Activated CD4-positive, alpha-beta T cell treated with anti-CD3 and anti-CD28 coated beads, Interleukin-2, amount 10 ng/mL, durations not matched to agents 24 days and 14 days (primary cell): ENCODE measurements at regions of chr9 and their contacts with region 1.

Region 1: GRCh38 chr9:27726244-27727081 is 153.2 kb upstream of the C9orf72 start:
- DNase-seq: peak; percentile 88
- H3K4me3 Mint-ChIP-seq: no peak overlapping the region
- H3K27ac Mint-ChIP-seq: no peak overlapping the region
- H3K4me1 Mint-ChIP-seq: peaks cover 3% of the 10 kb centered on the region
- H3K27me3 Mint-ChIP-seq: peaks cover 3% of the 10 kb centered on the region

Region 2: DNA sequence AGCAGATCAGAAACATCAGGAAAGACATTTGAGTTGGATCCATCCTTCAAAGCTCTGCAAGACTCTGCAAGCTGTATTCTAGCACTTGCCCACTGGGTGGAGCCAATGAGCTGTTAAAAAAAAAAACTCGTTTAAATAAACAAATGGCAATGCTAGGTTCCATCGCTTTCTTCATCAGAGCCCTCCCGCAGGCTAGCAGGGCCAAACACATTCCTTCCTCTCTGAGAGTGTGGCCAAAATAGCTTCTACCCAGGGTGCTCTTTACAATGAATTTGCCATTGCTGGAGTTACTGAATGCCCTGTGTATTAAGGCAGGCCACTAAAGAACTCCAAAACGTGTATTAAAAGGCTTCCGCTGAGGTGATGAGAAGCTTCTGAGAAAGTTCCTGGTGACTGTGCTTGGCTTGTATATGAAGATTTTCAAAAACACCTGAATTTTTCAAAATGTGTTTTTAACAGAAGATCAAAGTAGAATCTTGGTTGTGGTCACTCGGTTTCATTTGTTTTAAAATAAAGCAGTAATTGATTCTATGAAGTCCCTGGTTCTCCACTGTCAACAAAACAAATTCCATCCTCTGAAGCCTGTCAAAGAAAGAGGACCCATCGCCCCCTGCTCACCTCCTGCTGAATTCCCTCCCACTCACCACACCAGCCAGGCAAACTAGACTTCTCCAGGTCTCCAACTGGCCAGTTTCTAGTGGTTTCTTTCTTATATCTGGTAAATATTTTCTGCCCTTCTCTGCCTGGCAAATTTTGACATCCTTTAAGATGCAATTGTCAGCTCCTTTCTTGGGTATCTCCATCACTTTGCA is 393.0 kb before region 1 on chr9:
- intact Hi-C with region 1: loop called (anchors 5 kb)
- DNase-seq: peak; percentile 89
- H3K4me3 Mint-ChIP-seq: no peak overlapping the region
- H3K27ac Mint-ChIP-seq: no peak overlapping the region
- H3K4me1 Mint-ChIP-seq: peaks cover 3% of the 10 kb centered on the region
- H3K27me3 Mint-ChIP-seq: peaks cover 5% of the 10 kb centered on the region

Region 3: DNA sequence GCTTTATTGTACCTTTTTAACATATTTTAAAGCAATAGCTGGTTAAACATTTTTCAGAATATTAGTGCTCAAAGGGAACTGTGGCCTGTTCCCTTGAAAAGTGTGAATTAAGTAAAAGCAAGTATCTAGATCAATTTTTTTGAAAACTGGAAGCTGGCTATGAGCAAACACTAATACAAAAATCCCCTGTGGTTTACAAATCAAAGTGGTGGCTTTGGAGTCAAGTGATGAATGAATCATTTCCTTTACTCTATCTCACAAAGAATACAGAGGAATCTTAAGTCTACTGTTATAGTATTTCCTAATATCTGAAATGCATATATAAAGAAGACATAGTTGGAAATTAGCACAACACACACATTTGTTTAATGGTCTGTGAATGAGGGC is 59.2 kb after region 1 on chr9:
- intact Hi-C with region 1: loop called (anchors 1 kb)
- DNase-seq: peak; percentile 60
- H3K4me3 Mint-ChIP-seq: peak overlapping the region; percentile 46
- H3K27ac Mint-ChIP-seq: peak overlapping the region; percentile 85
- H3K4me1 Mint-ChIP-seq: peaks cover 15% of the 10 kb centered on the region
- H3K27me3 Mint-ChIP-seq: peaks cover 11% of the 10 kb centered on the region

Region 4: DNA sequence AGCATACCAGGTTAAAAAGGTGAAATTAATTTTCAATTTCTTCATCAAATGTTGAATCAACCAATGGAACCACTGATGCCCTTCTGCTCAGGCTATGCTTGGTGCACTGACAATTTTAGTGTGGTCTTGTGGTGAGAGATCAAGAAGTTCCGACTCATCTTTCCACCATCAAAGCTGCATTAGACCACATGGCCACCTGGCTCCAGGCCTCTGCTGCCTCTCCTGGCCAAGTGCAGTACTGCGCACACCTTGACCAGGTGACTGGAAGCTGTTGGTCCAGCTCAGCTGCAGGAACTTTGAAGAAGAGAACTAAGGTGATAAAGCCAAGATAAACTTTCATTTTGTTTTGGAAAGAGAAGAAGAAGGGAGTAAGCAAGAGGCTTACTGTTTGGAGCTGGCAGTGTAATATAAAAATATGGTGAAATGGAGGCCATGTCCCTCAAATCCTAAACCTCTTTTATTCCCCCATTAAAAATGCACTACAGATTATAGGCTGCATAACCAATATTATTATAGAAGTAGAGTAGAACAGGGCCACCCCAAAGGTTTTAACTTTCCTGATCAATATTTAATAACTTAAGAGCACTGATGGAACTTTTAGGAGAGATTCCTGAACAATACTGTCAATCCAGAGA is 162.3 kb after region 1 on chr9:
- intact Hi-C with region 1: loop called (anchors 2 kb)
- DNase-seq: peak; percentile 82
- H3K4me3 Mint-ChIP-seq: no peak overlapping the region
- H3K27ac Mint-ChIP-seq: no peak overlapping the region
- H3K4me1 Mint-ChIP-seq: no peaks in the 10 kb centered on the region
- H3K27me3 Mint-ChIP-seq: peaks cover 2% of the 10 kb centered on the region

Region 5: DNA sequence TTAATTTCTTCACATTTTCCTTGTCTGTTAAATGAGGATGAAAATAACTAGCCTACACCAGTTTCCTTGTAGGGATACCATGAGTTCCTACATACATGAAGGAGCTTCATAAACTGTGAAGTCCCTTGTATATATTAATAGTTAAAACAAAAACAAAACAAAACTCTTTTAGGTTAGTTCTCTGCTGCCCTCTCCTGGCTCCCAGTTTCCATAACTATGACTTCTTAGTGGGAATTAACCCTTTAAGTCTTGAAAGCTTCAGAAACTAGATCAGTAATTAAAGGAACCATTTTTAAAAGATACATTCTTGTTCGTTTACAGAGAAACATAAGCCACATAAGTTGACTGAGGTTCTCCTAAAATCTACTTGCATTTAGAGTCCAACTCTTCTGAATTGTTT is 346.8 kb after region 1 on chr9:
- intact Hi-C with region 1: loop called (anchors 1 kb)
- DNase-seq: no peak
- H3K4me3 Mint-ChIP-seq: no peak overlapping the region
- H3K27ac Mint-ChIP-seq: no peak overlapping the region
- H3K4me1 Mint-ChIP-seq: no peaks in the 10 kb centered on the region
- H3K27me3 Mint-ChIP-seq: no peaks in the 10 kb centered on the region

Region 6: GRCh38 chr9:29211580-29212396 is 1485.3 kb after region 1 on chr9:
- intact Hi-C with region 1: loop called (anchors 5 kb)
- DNase-seq: peak; percentile 79
- H3K4me3 Mint-ChIP-seq: no peak overlapping the region
- H3K27ac Mint-ChIP-seq: no peak overlapping the region
- H3K4me1 Mint-ChIP-seq: peaks cover 2% of the 10 kb centered on the region
- H3K27me3 Mint-ChIP-seq: peaks cover 52% of the 10 kb centered on the region